ENCODE measurements at regions of chr21 and their contacts with region 1.

Region 1: DNA sequence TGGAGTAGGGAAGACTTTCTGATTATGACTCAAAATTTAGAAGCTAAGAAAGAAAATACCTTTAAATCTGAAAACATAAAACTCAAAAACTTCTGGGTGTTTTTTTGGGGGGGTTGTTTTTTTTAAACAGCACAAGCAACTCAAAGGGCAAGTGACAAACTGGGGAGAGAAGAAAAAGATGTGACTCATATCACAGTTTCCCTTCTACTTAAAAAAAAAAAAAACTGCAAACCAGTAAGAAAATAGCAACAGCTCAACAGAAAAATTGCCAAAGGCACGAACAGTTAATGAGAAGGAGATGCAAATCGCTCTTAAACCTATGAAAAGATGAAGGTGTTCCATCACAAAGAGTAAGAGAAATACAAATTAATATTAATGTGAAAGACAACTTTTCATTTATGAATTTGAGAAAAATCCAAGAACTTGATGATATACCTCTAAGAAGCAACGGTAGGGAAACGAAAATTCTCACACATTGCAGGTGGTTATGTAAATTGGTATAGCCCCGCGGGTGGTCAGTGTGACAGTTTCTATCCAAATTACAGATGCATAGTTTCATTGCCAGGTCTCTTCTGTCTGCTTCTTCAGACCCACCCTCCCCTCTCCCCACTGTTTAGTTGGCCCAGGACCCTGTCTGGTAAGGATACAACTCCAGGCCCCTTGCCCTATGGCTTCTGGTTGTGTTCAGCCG is 9.0 kb downstream of the IFNAR2 start:
- DNase-seq: peak; percentile 76
- ATAC-seq: peak; percentile 79
- H3K4me3 ChIP-seq: peak overlapping the region; percentile 66
- H3K27ac ChIP-seq: peak overlapping the region; percentile 86
- H3K4me1 ChIP-seq: peaks cover 56% of the 10 kb centered on the region
- H3K27me3 ChIP-seq: no peaks in the 10 kb centered on the region
- CTCF ChIP-seq: no peak
- EP300 ChIP-seq: peak; percentile 79 to 96
- POLR2A ChIP-seq: 0 out of 2 replicates have a peak, but pooled peaks have one; percentile 40
- RAD21 ChIP-seq: 0 out of 2 replicates have a peak, but pooled peaks have one; percentile 10

Region 2: DNA sequence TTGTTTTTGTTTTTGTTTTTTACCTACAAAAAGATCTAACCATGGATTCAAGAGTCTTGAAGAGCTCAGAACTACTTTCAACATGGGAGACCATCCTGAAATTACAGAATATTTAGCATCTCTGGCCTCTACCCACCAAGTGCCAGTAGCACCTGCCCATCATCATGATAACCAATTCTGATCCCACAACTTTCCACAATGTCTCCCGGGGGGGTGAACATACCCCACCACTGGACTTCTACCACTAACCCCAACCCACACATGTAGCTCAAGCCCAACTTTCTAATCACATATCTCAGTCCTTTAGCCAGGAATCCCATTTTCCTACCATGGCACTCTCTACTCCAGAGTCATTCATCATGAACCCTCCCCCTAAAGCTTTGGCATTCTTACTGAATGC is 24.7 kb before region 1 on chr21:
- CTCF ChIA-PET with region 1: interaction called, 7 read pairs
- POLR2A ChIA-PET with region 1: interaction called, 10 read pairs
- RAD21 ChIA-PET with region 1: interaction called, 4 read pairs
- SMC1A ChIA-PET with region 1: interaction called, 6 read pairs
- in situ Hi-C with region 1: no loop called
- intact Hi-C with region 1: no loop called
- DNase-seq: no peak
- ATAC-seq: no peak
- H3K4me3 ChIP-seq: no peak overlapping the region
- H3K27ac ChIP-seq: no peak overlapping the region
- H3K4me1 ChIP-seq: peaks cover 40% of the 10 kb centered on the region
- H3K27me3 ChIP-seq: no peaks in the 10 kb centered on the region
- CTCF ChIP-seq: no peak
- EP300 ChIP-seq: no peak
- POLR2A ChIP-seq: no peak
- RAD21 ChIP-seq: no peak

Region 3: GRCh38 chr21:33308586-33309490 is 70.1 kb after region 1 on chr21:
- CTCF ChIA-PET with region 1: interaction called, 4 read pairs
- POLR2A ChIA-PET with region 1: interaction called, 10 read pairs
- RAD21 ChIA-PET with region 1: no interaction called
- SMC1A ChIA-PET with region 1: interaction called, 10 read pairs
- in situ Hi-C with region 1: no loop called
- intact Hi-C with region 1: no loop called
- DNase-seq: peak; percentile 98
- ATAC-seq: peak; percentile 96
- H3K4me3 ChIP-seq: peak overlapping the region; percentile 9; the same call in 1 of the 2 replicates
- H3K27ac ChIP-seq: peak overlapping the region; percentile 57
- H3K4me1 ChIP-seq: peaks cover 21% of the 10 kb centered on the region
- H3K27me3 ChIP-seq: no peaks in the 10 kb centered on the region
- CTCF ChIP-seq: peak in 2 of 3 experiments; percentile 5 to 33; a peak in 2 of 6 replicates
- EP300 ChIP-seq: peak; percentile 91; a peak in 3 of 4 replicates
- POLR2A ChIP-seq: no peak
- RAD21 ChIP-seq: 0 out of 2 replicates have a peak, but pooled peaks have one; percentile 17

Measured in GM12878 (cell line).